PC-9 (cell line): ENCODE measurements at regions of chr1 and their contacts with region 1.

Region 1: DNA sequence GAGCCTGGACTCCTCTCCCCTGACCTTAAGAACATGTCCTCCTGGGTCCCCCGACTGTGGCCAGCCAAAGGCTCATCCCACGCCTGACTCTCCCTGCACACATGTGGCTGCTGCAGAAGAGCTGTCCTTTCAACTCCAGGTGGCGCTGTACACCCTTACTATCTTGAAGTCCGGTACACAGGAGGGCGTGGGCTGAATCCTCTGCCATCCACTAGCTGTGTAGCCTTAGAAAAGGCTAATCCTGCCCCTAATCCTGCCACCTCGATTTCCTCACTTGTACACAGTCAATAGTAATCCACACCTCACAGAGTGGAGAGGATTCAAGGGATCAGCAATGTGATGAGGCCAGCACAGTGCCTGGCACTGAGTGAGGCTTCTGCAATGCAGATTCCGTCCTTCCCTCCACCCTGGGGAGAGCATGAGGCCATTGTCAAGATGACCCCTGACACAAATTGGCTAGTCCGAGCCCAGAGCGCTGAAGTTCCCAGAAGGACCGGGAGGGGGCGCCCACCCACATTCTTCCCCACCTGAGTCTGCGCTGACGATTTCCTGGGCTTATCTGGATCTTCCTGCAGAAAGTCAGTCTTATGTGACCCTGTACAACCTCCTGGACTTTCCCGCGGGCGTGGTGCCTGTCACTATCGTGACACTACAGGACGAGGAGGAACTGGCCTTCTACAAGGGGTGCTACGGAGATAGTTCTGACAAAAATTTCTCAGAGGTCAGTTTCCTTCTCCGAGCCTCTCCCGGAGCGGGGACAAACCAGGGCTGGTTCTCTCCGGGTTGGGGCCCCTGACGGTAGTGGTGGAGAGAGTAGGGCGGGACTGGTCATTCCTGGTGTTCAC is 47.1 kb upstream of the DMBX1 start:
- DNase-seq: peak; percentile 61 to 91
- H3K4me3 ChIP-seq: peak overlapping the region; percentile 58
- H3K27ac ChIP-seq: no peak overlapping the region
- H3K4me1 ChIP-seq: 0 out of 2 replicates have a peak, but pooled peaks cover 8% of the 10 kb centered on the region
- H3K27me3 ChIP-seq: peaks cover 5% of the 10 kb centered on the region
- CTCF ChIP-seq: peak; percentile 93

Region 2: GRCh38 chr1:46477153-46477929 is 34.8 kb after region 1 on chr1:
- CTCF ChIA-PET with region 1: interaction called, 6 read pairs
- POLR2A ChIA-PET with region 1: no interaction called
- intact Hi-C with region 1: loop called (anchors 1 kb)
- DNase-seq: peak; percentile 46 to 82
- H3K4me3 ChIP-seq: no peak overlapping the region
- H3K27ac ChIP-seq: no peak overlapping the region
- H3K4me1 ChIP-seq: peaks cover 9% of the 10 kb centered on the region; the same call in 1 of the 2 replicates
- H3K27me3 ChIP-seq: 0 out of 2 replicates have a peak, but pooled peaks cover 5% of the 10 kb centered on the region
- CTCF ChIP-seq: peak; percentile 96

Region 3: DNA sequence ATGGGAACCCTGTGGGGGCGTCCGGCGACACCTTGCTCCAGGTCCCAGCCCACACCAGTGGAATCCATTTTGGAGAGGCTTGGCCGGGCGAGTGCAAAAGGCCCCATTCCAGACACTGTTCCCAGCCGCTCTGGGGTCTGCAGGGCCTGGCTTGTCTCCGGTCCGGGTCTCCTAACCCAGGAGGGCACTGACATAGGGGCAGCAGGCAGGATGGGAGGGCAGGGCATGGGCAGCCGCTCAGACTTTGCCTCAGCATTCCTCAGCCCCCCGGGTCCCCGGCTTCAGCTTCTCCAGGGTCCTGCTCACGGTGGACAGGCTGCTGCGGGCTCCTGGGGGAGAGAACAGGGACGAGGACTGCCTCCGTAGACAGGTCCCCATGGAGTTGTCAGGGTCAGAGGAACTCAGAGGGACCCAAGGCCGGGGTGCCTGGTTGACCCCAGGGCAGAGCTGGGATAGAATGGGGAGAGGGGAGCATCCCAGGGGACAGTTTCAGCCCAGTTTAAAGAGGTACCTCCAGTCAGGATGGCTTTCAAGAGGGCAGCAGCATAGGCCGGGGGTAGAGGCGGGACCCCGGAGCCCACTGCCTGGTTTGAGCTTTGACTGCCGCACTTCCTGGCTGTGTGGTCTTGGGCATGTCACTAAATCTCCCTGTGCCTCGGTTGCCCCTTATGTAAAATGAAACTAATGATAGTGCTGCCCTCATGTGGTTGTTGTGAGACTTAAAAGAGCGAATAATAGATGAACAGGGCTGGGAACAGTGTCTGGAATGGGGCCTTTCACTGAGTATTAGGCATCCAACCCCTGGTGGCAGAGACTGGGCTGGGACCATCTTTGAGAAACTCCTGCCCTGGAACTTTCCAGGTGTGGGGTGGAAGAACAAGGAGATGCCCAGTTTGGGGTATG is 105.2 kb after region 1 on chr1:
- CTCF ChIA-PET with region 1: interaction called, 6 read pairs
- POLR2A ChIA-PET with region 1: no interaction called
- intact Hi-C with region 1: loop called (anchors 5 kb)
- DNase-seq: peak; percentile 32 to 33
- H3K4me3 ChIP-seq: no peak overlapping the region
- H3K27ac ChIP-seq: no peak overlapping the region
- H3K4me1 ChIP-seq: no peaks in the 10 kb centered on the region
- H3K27me3 ChIP-seq: peaks cover 22% of the 10 kb centered on the region
- CTCF ChIP-seq: peak; percentile 72

Region 4: GRCh38 chr1:46724991-46725735 is 282.6 kb after region 1 on chr1:
- CTCF ChIA-PET with region 1: no interaction called
- POLR2A ChIA-PET with region 1: no interaction called
- intact Hi-C with region 1: loop called (anchors 2 kb)
- DNase-seq: peak; percentile 45 to 65
- H3K4me3 ChIP-seq: no peak overlapping the region
- H3K27ac ChIP-seq: no peak overlapping the region
- H3K4me1 ChIP-seq: peaks cover 20% of the 10 kb centered on the region
- H3K27me3 ChIP-seq: peaks cover 4% of the 10 kb centered on the region; the same call in 1 of the 2 replicates
- CTCF ChIP-seq: peak; percentile 91

Region 5: GRCh38 chr1:46991083-46991923 is 548.8 kb after region 1 on chr1:
- CTCF ChIA-PET with region 1: no interaction called
- POLR2A ChIA-PET with region 1: no interaction called
- intact Hi-C with region 1: loop called (anchors 10 kb)
- DNase-seq: no peak
- H3K4me3 ChIP-seq: no peak overlapping the region
- H3K27ac ChIP-seq: no peak overlapping the region
- H3K4me1 ChIP-seq: no peaks in the 10 kb centered on the region
- H3K27me3 ChIP-seq: no peaks in the 10 kb centered on the region; the same call in 1 of the 2 replicates
- CTCF ChIP-seq: peak; percentile 48